Gastrocnemius medialis (tissue), 4 donors: ENCODE measurements at regions of chr7 and their contacts with region 1.

Region 1: DNA sequence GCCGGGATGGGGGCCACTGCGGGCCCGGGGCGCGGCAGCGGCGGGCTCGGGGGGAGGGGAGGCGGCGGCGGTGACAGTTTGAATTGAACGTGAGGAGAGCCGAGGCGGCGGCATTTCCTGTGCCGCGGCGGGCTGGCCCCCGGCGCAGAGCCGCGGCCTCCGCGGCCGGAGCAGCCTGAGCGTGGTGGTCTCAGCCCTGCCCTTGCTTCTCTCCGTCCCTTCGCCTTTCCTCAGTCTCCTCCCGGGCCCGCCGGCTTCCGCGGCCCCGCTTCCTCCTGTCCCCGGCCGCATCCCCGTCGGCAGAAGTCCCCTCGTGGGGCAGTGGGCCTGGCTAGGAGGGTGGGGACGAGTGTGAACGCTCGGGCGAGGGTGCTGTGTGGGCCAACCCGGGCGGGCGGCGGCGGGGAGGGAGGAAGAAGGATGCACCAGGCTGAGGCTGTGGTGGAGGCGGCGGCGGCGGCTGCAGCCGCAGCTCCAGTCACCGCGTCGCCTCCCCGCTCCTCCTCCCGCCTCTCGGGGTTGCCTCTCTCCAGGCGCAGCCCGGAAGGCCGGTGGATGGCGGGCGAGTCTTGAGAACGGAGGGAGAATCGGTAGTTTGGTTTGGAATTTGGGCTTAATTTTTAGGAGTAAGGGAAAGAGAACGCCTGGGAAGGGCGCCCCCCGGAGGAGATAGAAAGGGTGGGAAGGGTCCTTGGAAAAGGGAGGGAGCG is 690 bp downstream of the SEPTIN7 start:
- DNase-seq: peak; percentile 25 to 41
- ATAC-seq: peak; percentile 39 to 53
- H3K4me3 ChIP-seq: peak overlapping the region; percentile 86 to 96 (median 90)
- H3K27ac ChIP-seq: peak overlapping the region; percentile 92 to 96 (median 94)
- H3K4me1 ChIP-seq: peaks cover 23 to 28% of the 10 kb centered on the region in 2 donors
- H3K27me3 ChIP-seq: no peaks in the 10 kb centered on the region
- CTCF ChIP-seq: peak in 3 of 5 experiments; percentile 34 to 66 (median 64)
- POLR2A ChIP-seq: no peak

Region 2: GRCh38 chr7:35716038-35716803 is 85.3 kb before region 1 on chr7:
- in situ Hi-C with region 1: loop called in 1 of 4 experiments (anchors 25 kb)
- intact Hi-C with region 1: loop called (anchors 1 kb)
- DNase-seq: peak; percentile 31 to 57
- ATAC-seq: peak; percentile 82 to 90
- H3K4me3 ChIP-seq: peak overlapping the region; percentile 28 to 35 (median 30)
- H3K27ac ChIP-seq: peak overlapping the region; percentile 48 to 75 (median 70)
- H3K4me1 ChIP-seq: peaks cover 19 to 47% of the 10 kb centered on the region in 2 donors
- H3K27me3 ChIP-seq: no peaks in the 10 kb centered on the region
- CTCF ChIP-seq: no peak
- POLR2A ChIP-seq: no peak

Region 3: DNA sequence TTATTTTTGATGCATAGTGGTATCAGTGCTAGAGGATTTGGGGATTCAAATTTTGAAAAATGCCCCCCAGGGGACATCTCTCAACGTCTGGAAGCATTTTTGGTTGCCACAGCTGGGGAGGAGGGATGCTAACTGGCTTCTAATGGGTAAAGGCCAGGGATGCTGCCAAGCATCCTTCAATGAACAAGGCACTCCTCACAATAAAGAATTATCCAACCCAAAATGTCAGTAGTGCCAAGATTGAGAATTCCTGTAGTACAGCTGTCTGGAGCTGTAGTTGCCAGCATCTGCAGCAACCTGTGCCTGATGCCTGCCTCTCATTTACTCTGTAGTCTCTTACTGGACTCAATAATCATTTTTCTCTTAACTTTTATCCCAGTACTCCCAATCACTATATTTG is 52.8 kb after region 1 on chr7:
- in situ Hi-C with region 1: no loop called
- intact Hi-C with region 1: loop called (anchors 10 kb)
- DNase-seq: no peak
- ATAC-seq: no peak
- H3K4me3 ChIP-seq: no peak overlapping the region
- H3K27ac ChIP-seq: no peak overlapping the region
- H3K4me1 ChIP-seq: peaks cover 24 to 32% of the 10 kb centered on the region in 2 donors
- H3K27me3 ChIP-seq: no peaks in the 10 kb centered on the region
- CTCF ChIP-seq: no peak
- POLR2A ChIP-seq: no peak

Region 4: DNA sequence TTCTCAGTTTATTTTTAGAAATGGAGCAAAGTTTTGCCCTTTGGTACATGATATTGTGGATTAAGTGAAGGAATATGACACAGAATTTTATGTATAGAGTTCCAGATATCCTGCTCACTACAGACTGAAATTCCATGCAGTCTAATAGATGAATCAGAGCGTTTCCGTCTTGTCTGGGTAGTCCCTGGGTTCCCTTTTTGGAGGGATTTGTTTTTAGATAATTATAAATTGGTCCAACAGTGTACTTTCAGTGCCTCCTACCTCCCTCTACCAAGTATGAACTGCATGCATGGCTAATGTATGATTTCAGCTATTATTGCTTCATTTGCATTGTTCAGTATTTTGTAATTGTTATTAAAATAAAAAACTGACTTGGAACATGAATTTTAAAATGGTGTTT is 73.7 kb after region 1 on chr7:
- in situ Hi-C with region 1: no loop called
- intact Hi-C with region 1: no loop called
- DNase-seq: no peak
- ATAC-seq: no peak
- H3K4me3 ChIP-seq: no peak overlapping the region
- H3K27ac ChIP-seq: no peak overlapping the region
- H3K4me1 ChIP-seq: peaks cover 0 to 4% of the 10 kb centered on the region in 2 donors
- H3K27me3 ChIP-seq: no peaks in the 10 kb centered on the region
- CTCF ChIP-seq: no peak
- POLR2A ChIP-seq: no peak

Region 5: GRCh38 chr7:36291387-36292316 is 490.1 kb after region 1 on chr7:
- in situ Hi-C with region 1: no loop called
- intact Hi-C with region 1: loop called (anchors 5 kb)
- DNase-seq: peak; percentile 71 to 82
- ATAC-seq: peak; percentile 47 to 57
- H3K4me3 ChIP-seq: peak overlapping the region; percentile 30 to 47 (median 35)
- H3K27ac ChIP-seq: peak overlapping the region; percentile 86 to 96 (median 94)
- H3K4me1 ChIP-seq: peaks cover 49 to 60% of the 10 kb centered on the region in 2 donors
- H3K27me3 ChIP-seq: no peaks in the 10 kb centered on the region
- CTCF ChIP-seq: peak; percentile 97 to 99 (median 97)
- POLR2A ChIP-seq: no peak